ENCODE measurements at regions of chr2 and their contacts with region 1.

Region 1: GRCh38 chr2:85551698-85552678 is 9.3 kb downstream of the GGCX start:
- DNase-seq: peak; percentile 71
- H3K4me3 ChIP-seq: no peak overlapping the region
- H3K27ac ChIP-seq: no peak overlapping the region
- H3K4me1 ChIP-seq: no peaks in the 10 kb centered on the region
- H3K27me3 ChIP-seq: no peaks in the 10 kb centered on the region
- CTCF ChIP-seq: peak; percentile 95

Region 2: GRCh38 chr2:85066874-85067351 is 485.1 kb before region 1 on chr2:
- CTCF ChIA-PET with region 1: no interaction called
- dilution Hi-C with region 1: no loop called
- in situ Hi-C with region 1: no loop called
- intact Hi-C with region 1: loop called (anchors 1 kb)
- DNase-seq: peak; percentile 40
- H3K4me3 ChIP-seq: no peak overlapping the region
- H3K27ac ChIP-seq: no peak overlapping the region
- H3K4me1 ChIP-seq: peaks cover 5% of the 10 kb centered on the region
- H3K27me3 ChIP-seq: no peaks in the 10 kb centered on the region
- CTCF ChIP-seq: peak; percentile 74 to 88

Region 3: GRCh38 chr2:85302121-85302520 is 249.9 kb before region 1 on chr2:
- CTCF ChIA-PET with region 1: interaction called, 3 read pairs
- dilution Hi-C with region 1: no loop called
- in situ Hi-C with region 1: no loop called
- intact Hi-C with region 1: loop called (anchors 1 kb)
- DNase-seq: no peak
- H3K4me3 ChIP-seq: no peak overlapping the region
- H3K27ac ChIP-seq: no peak overlapping the region
- H3K4me1 ChIP-seq: peaks cover 5% of the 10 kb centered on the region
- H3K27me3 ChIP-seq: no peaks in the 10 kb centered on the region
- CTCF ChIP-seq: no peak

Region 4: GRCh38 chr2:85354286-85355072 is 197.5 kb before region 1 on chr2 and contains the starts of genes ELMOD3 and RETSAT:
- CTCF ChIA-PET with region 1: interaction called, 5 read pairs
- dilution Hi-C with region 1: no loop called
- in situ Hi-C with region 1: no loop called
- intact Hi-C with region 1: loop called (anchors 1 kb)
- DNase-seq: peak; percentile 99
- H3K4me3 ChIP-seq: peak within 1 kb of the TSS; percentile 78 to 95 (median 84)
- H3K27ac ChIP-seq: peak within 1 kb of the TSS; percentile 54
- H3K4me1 ChIP-seq: peaks cover 11% of the 10 kb centered on the region
- H3K27me3 ChIP-seq: no peaks in the 10 kb centered on the region
- CTCF ChIP-seq: no peak
- total RNA-seq, gene ELMOD3: 17.5 to 23.0 TPM
- total RNA-seq, gene RETSAT: 94.7 to 157 TPM

Region 5: GRCh38 chr2:85420536-85421259 is 131.3 kb before region 1 on chr2:
- CTCF ChIA-PET with region 1: interaction called, 19 read pairs
- dilution Hi-C with region 1: no loop called
- in situ Hi-C with region 1: loop called in 1 of 2 experiments (anchors 5 kb)
- intact Hi-C with region 1: loop called (anchors 1 kb)
- DNase-seq: peak; percentile 21
- H3K4me3 ChIP-seq: peak overlapping the region in 1 of 3 experiments; percentile 12
- H3K27ac ChIP-seq: no peak overlapping the region
- H3K4me1 ChIP-seq: peaks cover 30% of the 10 kb centered on the region
- H3K27me3 ChIP-seq: no peaks in the 10 kb centered on the region
- CTCF ChIP-seq: peak; percentile 96 to 99

Region 6: DNA sequence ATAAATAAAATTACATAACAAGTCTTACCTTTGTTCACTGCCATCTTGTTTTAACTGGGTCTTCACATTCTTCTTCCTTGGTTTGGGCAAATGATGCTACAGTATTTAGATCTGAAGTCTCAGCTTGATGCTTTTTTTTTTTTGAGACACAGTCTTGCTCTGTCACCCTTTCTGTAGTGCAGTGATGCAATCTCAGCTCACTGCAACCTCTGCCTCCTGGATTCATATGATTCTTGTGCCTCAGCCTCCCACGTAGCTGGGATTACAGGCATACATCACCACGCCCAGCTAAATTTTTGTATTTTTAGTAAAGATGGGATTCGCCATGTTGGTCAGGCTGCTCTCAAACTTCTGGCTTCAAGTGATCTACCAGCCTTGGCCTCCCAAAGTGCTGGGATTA is 66.2 kb before region 1 on chr2:
- CTCF ChIA-PET with region 1: no interaction called
- dilution Hi-C with region 1: no loop called
- in situ Hi-C with region 1: no loop called
- intact Hi-C with region 1: no loop called
- DNase-seq: no peak
- H3K4me3 ChIP-seq: no peak overlapping the region
- H3K27ac ChIP-seq: no peak overlapping the region
- H3K4me1 ChIP-seq: no peaks in the 10 kb centered on the region
- H3K27me3 ChIP-seq: no peaks in the 10 kb centered on the region
- CTCF ChIP-seq: no peak